ENCODE measurements at regions of chr9 and their contacts with region 1.

Region 1: GRCh38 chr9:126927419-126927818 is 12.8 kb downstream of the RALGPS1 start:
- DNase-seq: no peak
- H3K4me3 ChIP-seq: no peak overlapping the region
- H3K27ac ChIP-seq: no peak overlapping the region
- H3K4me1 ChIP-seq: peaks cover 7% of the 10 kb centered on the region
- H3K27me3 ChIP-seq: no peaks in the 10 kb centered on the region
- CTCF ChIP-seq: no peak

Region 2: GRCh38 chr9:126690431-126691350 is 236.7 kb before region 1 on chr9:
- CTCF ChIA-PET with region 1: no interaction called
- POLR2A ChIA-PET with region 1: no interaction called
- intact Hi-C with region 1: no loop called
- DNase-seq: peak in 1 of 2 experiments; percentile 71
- H3K4me3 ChIP-seq: no peak overlapping the region
- H3K27ac ChIP-seq: no peak overlapping the region
- H3K4me1 ChIP-seq: no peaks in the 10 kb centered on the region
- H3K27me3 ChIP-seq: peaks cover 60% of the 10 kb centered on the region
- CTCF ChIP-seq: peak; percentile 83

Region 3: DNA sequence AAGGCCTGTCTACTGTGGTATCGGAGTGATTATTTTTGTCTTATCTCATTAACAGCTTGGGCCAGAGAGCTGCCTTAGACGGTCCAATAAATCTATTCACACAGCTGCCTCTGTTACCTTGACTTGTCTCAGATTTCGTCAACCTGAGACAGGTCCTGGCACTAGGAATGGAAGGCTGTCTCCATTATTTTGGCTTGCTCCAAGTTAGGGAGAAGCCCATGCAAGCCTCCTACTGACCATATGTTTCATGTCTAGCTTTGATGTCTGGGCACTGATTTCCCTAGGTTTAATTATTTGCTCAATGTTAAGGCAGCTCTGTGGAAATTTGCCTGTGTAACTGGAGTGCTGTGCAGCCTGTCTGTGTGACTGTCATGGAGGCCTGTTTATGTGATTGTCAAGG is 25.2 kb before region 1 on chr9:
- CTCF ChIA-PET with region 1: no interaction called
- POLR2A ChIA-PET with region 1: interaction called, 12 read pairs
- intact Hi-C with region 1: no loop called
- DNase-seq: no peak
- H3K4me3 ChIP-seq: no peak overlapping the region
- H3K27ac ChIP-seq: no peak overlapping the region
- H3K4me1 ChIP-seq: no peaks in the 10 kb centered on the region
- H3K27me3 ChIP-seq: no peaks in the 10 kb centered on the region
- CTCF ChIP-seq: no peak

Region 4: DNA sequence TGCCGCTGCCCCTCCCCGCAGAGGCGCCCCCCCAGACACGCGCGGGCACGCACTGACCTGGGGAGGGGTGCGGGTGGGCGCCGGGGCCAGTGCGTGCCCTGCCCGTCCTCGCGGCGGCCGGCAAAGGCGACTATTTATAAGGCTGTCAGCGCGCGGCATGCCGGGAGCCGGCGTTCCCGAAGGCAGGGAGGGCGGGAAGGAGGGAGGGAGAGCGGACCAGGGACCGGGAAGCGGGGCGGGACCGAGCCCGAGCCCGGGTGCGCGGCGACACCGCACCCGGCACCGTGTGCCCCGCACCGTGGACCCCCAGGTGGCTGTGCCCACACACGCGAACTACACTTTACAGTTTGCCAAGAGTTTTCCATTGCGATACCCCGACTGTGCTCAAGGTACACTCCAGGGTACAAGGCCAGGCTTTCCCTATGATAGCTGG is 950.2 kb after region 1 on chr9 and contains the start of gene AK1:
- CTCF ChIA-PET with region 1: no interaction called
- POLR2A ChIA-PET with region 1: interaction called, 12 read pairs
- intact Hi-C with region 1: no loop called
- DNase-seq: peak in 1 of 2 experiments; percentile 74
- H3K4me3 ChIP-seq: peak within 1 kb of the TSS; percentile 62
- H3K27ac ChIP-seq: no peak within 1 kb of the TSS
- H3K4me1 ChIP-seq: peaks cover 19% of the 10 kb centered on the region; the same call in 1 of the 2 replicates
- H3K27me3 ChIP-seq: no peaks in the 10 kb centered on the region
- CTCF ChIP-seq: no peak
- total RNA-seq, gene AK1: 84.5 and 86.8 TPM in 2 replicates

Measured in PC-9 (cell line).